B cell (primary cell): ENCODE measurements at regions of chr3 and their contacts with region 1.

Region 1: DNA sequence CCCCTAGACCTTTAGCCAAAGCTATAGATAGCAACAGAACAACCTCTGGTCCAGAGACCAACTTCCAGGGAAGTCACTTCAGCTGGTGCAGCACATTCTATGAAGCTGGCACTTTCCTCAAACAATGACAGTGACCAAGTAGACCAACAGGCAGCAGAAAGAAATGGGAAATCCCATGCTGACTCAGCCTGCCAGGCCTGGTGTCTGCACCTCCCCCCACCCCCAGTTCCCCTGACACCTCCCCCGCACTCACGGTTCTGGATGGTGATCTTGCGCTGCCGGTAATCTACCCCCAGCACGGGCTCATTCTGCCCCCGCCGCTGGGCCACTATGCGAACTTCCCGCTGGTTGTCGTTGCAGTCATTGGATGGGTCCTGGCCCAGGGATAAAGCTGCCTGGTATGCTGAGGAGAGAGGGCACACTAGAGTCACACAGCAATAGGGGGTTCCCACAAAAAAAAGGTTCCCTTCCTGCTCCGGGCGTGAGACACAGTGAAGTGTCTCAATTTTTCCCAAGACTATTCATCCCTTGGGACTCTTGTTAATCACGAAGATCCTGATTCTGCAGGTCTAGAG is 17.0 kb downstream of the ILDR1 start:
- DNase-seq: peak; percentile 68
- ATAC-seq: peak; percentile 50
- H3K4me3 ChIP-seq: no peak overlapping the region
- H3K4me3 Mint-ChIP-seq: peak overlapping the region; percentile 78
- H3K27ac ChIP-seq: peak overlapping the region in 1 of 2 donors; percentile 87
- H3K27ac Mint-ChIP-seq: peak overlapping the region; percentile 87
- H3K4me1 ChIP-seq: peaks cover 35 to 50% of the 10 kb centered on the region in 2 donors
- H3K4me1 Mint-ChIP-seq: peaks cover 55% of the 10 kb centered on the region
- H3K27me3 ChIP-seq: no peaks in the 10 kb centered on the region
- H3K27me3 Mint-ChIP-seq: no peaks in the 10 kb centered on the region
- CTCF ChIP-seq: no peak

Region 2: GRCh38 chr3:121989943-121990342 is 15.1 kb before region 1 on chr3:
- CTCF ChIA-PET with region 1: interaction called, 16 read pairs
- POLR2A ChIA-PET with region 1: interaction called, 6 read pairs
- intact Hi-C with region 1: loop called (anchors 1 kb)
- DNase-seq: no peak
- ATAC-seq: no peak
- H3K4me3 ChIP-seq: no peak overlapping the region
- H3K4me3 Mint-ChIP-seq: no peak overlapping the region
- H3K27ac ChIP-seq: no peak overlapping the region
- H3K27ac Mint-ChIP-seq: peak overlapping the region; percentile 59
- H3K4me1 ChIP-seq: peaks cover 49% of the 10 kb centered on the region in 2 donors
- H3K4me1 Mint-ChIP-seq: peaks cover 49% of the 10 kb centered on the region
- H3K27me3 ChIP-seq: no peaks in the 10 kb centered on the region
- H3K27me3 Mint-ChIP-seq: no peaks in the 10 kb centered on the region
- CTCF ChIP-seq: no peak

Region 3: GRCh38 chr3:122055215-122055614 is 50.1 kb after region 1 on chr3 and contains the start of gene CD86:
- CTCF ChIA-PET with region 1: interaction called, 8 read pairs
- POLR2A ChIA-PET with region 1: no interaction called
- intact Hi-C with region 1: loop called (anchors 1 kb)
- DNase-seq: peak; percentile 70
- ATAC-seq: peak; percentile 82
- H3K4me3 ChIP-seq: peak within 1 kb of the TSS; percentile 30 to 70 (median 54)
- H3K4me3 Mint-ChIP-seq: peak within 1 kb of the TSS; percentile 83
- H3K27ac ChIP-seq: peak within 1 kb of the TSS in 1 of 2 donors; percentile 33
- H3K27ac Mint-ChIP-seq: peak within 1 kb of the TSS; percentile 70
- H3K4me1 ChIP-seq: peaks cover 24 to 26% of the 10 kb centered on the region in 2 donors
- H3K4me1 Mint-ChIP-seq: peaks cover 31% of the 10 kb centered on the region
- H3K27me3 ChIP-seq: no peaks in the 10 kb centered on the region
- H3K27me3 Mint-ChIP-seq: no peaks in the 10 kb centered on the region
- CTCF ChIP-seq: no peak
- total RNA-seq, gene CD86: 31.5 and 37.6 TPM in 2 replicates

Region 4: GRCh38 chr3:122092460-122093165 is 87.5 kb after region 1 on chr3:
- CTCF ChIA-PET with region 1: interaction called, 6 read pairs
- POLR2A ChIA-PET with region 1: no interaction called
- intact Hi-C with region 1: loop called (anchors 5 kb)
- DNase-seq: peak; percentile 40
- ATAC-seq: peak; percentile 34
- H3K4me3 ChIP-seq: no peak overlapping the region
- H3K4me3 Mint-ChIP-seq: peak overlapping the region; percentile 74
- H3K27ac ChIP-seq: peak overlapping the region in 1 of 2 donors; percentile 60
- H3K27ac Mint-ChIP-seq: peak overlapping the region; percentile 81
- H3K4me1 ChIP-seq: peaks cover 23 to 27% of the 10 kb centered on the region in 2 donors
- H3K4me1 Mint-ChIP-seq: peaks cover 37% of the 10 kb centered on the region
- H3K27me3 ChIP-seq: no peaks in the 10 kb centered on the region
- H3K27me3 Mint-ChIP-seq: no peaks in the 10 kb centered on the region
- CTCF ChIP-seq: peak; percentile 36